H1 (cell line): ENCODE measurements at regions of chr11 and their contacts with region 1.

Region 1: GRCh38 chr11:114340311-114341131 is 44.3 kb downstream of the NNMT start:
- DNase-seq: peak in 1 of 2 experiments; percentile 61
- H3K4me3 ChIP-seq: no peak overlapping the region
- H3K27ac ChIP-seq: no peak overlapping the region
- H3K4me1 ChIP-seq: peaks cover 0 to 4% (median 3%) of the 10 kb centered on the region in 4 experiments; a peak in 2 of 7 replicates
- H3K27me3 ChIP-seq: no peaks in the 10 kb centered on the region
- CTCF ChIP-seq: peak; percentile 33 to 84 (median 81)
- EP300 ChIP-seq: no peak
- POLR2A ChIP-seq: no peak
- RAD21 ChIP-seq: peak; percentile 88 to 91

Region 2: GRCh38 chr11:114291842-114292680 is 48.5 kb before region 1 on chr11:
- CTCF ChIA-PET with region 1: interaction called, 10 read pairs
- POLR2A ChIA-PET with region 1: no interaction called
- DNase-seq: no peak
- H3K4me3 ChIP-seq: no peak overlapping the region
- H3K27ac ChIP-seq: no peak overlapping the region
- H3K4me1 ChIP-seq: no peaks in the 10 kb centered on the region
- H3K27me3 ChIP-seq: no peaks in the 10 kb centered on the region
- CTCF ChIP-seq: no peak
- EP300 ChIP-seq: no peak
- POLR2A ChIP-seq: no peak
- RAD21 ChIP-seq: no peak

Region 3: GRCh38 chr11:114319716-114320328 is 20.7 kb before region 1 on chr11:
- CTCF ChIA-PET with region 1: interaction called, 10 read pairs
- POLR2A ChIA-PET with region 1: no interaction called
- DNase-seq: no peak
- H3K4me3 ChIP-seq: no peak overlapping the region
- H3K27ac ChIP-seq: no peak overlapping the region
- H3K4me1 ChIP-seq: peaks cover 2 to 24% (median 14%) of the 10 kb centered on the region in 4 experiments; a peak in 6 of 7 replicates
- H3K27me3 ChIP-seq: no peaks in the 10 kb centered on the region; a peak in 1 of 7 replicates
- CTCF ChIP-seq: no peak
- EP300 ChIP-seq: no peak
- POLR2A ChIP-seq: no peak
- RAD21 ChIP-seq: no peak